Psoas muscle (tissue), 8 donors: ENCODE measurements at regions of chr16 and their contacts with region 1.

Region 1: DNA sequence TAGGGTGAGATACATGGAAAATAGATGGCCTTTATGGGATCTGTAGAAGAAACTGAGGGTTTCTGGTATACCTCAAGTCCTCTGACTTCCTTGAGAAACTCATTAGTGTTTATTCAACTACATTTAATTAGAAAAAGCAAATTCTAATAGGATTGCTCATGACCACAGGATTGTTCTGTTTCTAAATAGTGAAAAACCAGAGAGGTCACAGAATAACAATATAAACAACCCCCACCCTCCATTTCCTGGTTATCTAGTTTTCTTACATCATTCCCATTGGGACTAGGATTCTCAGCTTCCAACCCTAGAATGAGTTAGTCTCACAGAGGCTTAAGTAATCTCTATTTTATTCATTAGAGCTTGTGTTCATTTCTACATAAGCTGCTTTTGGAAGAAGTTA is 30.0 kb downstream of the SF3B3 start:
- DNase-seq: no peak
- ATAC-seq: no peak
- H3K4me3 ChIP-seq: no peak overlapping the region
- H3K27ac ChIP-seq: no peak overlapping the region
- H3K4me1 ChIP-seq: no peaks in the 10 kb centered on the region
- H3K27me3 ChIP-seq: no peaks in the 10 kb centered on the region
- CTCF ChIP-seq: no peak

Region 2: DNA sequence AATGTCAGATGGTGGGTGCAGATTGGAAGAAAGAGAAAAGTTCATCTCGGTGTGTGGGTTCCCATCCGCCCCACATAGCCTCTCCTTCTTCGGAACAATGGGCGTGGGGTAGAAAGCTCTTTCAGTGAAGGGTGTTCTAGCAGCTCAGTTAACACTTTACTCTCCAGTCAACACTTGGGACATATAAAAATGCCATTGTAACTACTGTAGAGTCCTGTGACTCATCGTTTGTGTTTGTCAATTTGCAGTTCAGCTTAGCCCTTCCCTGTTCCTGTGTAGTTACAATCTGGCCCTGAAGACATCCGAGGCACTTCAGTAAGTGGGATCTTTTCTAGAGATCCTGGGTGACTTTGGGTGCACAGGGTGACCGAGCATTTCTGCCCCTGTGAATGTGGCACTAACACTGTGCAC is 391.6 kb before region 1 on chr16:
- intact Hi-C with region 1: no loop called
- DNase-seq: no peak
- ATAC-seq: no peak
- H3K4me3 ChIP-seq: no peak overlapping the region
- H3K27ac ChIP-seq: no peak overlapping the region
- H3K4me1 ChIP-seq: no peaks in the 10 kb centered on the region
- H3K27me3 ChIP-seq: no peaks in the 10 kb centered on the region
- CTCF ChIP-seq: no peak

Region 3: GRCh38 chr16:70349783-70350182 is 203.9 kb before region 1 on chr16:
- intact Hi-C with region 1: loop called in 1 of 2 experiments (anchors 10 kb)
- DNase-seq: peak in 1 of 2 donors; percentile 3
- ATAC-seq: no peak
- H3K4me3 ChIP-seq: no peak overlapping the region
- H3K27ac ChIP-seq: peak overlapping the region; percentile 24
- H3K4me1 ChIP-seq: peaks cover 22% of the 10 kb centered on the region
- H3K27me3 ChIP-seq: no peaks in the 10 kb centered on the region
- CTCF ChIP-seq: no peak

Region 4: GRCh38 chr16:70396246-70396904 is 157.3 kb before region 1 on chr16:
- intact Hi-C with region 1: no loop called
- DNase-seq: no peak
- ATAC-seq: no peak
- H3K4me3 ChIP-seq: no peak overlapping the region
- H3K27ac ChIP-seq: no peak overlapping the region
- H3K4me1 ChIP-seq: peaks cover 11% of the 10 kb centered on the region
- H3K27me3 ChIP-seq: no peaks in the 10 kb centered on the region
- CTCF ChIP-seq: no peak